ENCODE measurements at regions of chr7 and their contacts with region 1.

Region 1: DNA sequence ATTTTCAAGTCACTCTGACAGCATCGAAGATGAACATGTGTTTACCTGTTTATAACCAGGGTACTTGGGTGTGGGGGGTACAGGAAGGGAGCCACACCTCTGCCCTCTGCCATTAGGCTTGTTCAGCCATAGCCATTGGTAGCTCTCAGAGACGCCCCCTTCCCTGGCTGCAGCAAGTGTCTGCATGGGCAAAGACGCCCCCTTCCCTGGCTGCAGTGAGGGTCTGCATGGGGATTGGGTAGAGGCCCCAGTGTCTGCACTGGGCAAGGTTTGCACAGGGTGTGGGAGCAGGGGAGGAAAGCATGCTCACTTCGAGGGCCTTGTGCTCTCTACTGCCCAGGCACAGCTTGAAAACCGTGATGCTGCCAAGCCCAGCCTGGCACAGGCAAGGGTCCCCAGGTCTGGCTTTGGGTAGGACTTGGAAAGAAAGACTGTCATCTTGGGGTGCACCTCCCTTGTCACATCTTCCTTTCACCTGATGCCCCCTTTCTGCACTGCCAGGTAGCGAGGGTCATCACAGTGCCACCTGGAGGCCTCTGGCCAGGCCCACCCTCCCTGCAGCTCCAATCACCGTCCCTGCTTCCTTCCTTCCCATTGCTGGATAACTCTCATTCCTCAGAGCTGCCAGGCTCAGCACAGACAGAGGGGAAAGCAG is 3.7 kb downstream of the TMEM225B start:
- DNase-seq: no peak
- ATAC-seq: 0 out of 3 replicates have a peak, but pooled peaks have one; percentile 22
- H3K4me3 ChIP-seq: no peak overlapping the region
- H3K27ac ChIP-seq: no peak overlapping the region
- H3K4me1 ChIP-seq: no peaks in the 10 kb centered on the region
- H3K27me3 ChIP-seq: no peaks in the 10 kb centered on the region
- CTCF ChIP-seq: 0 out of 6 replicates have a peak, but pooled peaks of 1 of the 3 experiments have one; percentile 10
- EP300 ChIP-seq: no peak
- POLR2A ChIP-seq: no peak
- RAD21 ChIP-seq: no peak

Region 2: GRCh38 chr7:99579956-99580777 is 21.6 kb before region 1 on chr7:
- CTCF ChIA-PET with region 1: no interaction called
- POLR2A ChIA-PET with region 1: no interaction called
- RAD21 ChIA-PET with region 1: no interaction called
- SMC1A ChIA-PET with region 1: no interaction called
- in situ Hi-C with region 1: no loop called
- intact Hi-C with region 1: loop called (anchors 2 kb)
- DNase-seq: no peak
- ATAC-seq: peak; percentile 79
- H3K4me3 ChIP-seq: peak overlapping the region; percentile 37
- H3K27ac ChIP-seq: no peak overlapping the region
- H3K4me1 ChIP-seq: no peaks in the 10 kb centered on the region
- H3K27me3 ChIP-seq: no peaks in the 10 kb centered on the region; a peak in 1 of 4 replicates
- CTCF ChIP-seq: peak in 2 of 3 experiments; percentile 30 to 43; a peak in 3 of 6 replicates
- EP300 ChIP-seq: no peak
- POLR2A ChIP-seq: no peak
- RAD21 ChIP-seq: peak; percentile 20; the same call in 1 of the 2 replicates

Measured in GM12878 (cell line).